ENCODE measurements at regions of chr21 and their contacts with region 1.

Region 1: DNA sequence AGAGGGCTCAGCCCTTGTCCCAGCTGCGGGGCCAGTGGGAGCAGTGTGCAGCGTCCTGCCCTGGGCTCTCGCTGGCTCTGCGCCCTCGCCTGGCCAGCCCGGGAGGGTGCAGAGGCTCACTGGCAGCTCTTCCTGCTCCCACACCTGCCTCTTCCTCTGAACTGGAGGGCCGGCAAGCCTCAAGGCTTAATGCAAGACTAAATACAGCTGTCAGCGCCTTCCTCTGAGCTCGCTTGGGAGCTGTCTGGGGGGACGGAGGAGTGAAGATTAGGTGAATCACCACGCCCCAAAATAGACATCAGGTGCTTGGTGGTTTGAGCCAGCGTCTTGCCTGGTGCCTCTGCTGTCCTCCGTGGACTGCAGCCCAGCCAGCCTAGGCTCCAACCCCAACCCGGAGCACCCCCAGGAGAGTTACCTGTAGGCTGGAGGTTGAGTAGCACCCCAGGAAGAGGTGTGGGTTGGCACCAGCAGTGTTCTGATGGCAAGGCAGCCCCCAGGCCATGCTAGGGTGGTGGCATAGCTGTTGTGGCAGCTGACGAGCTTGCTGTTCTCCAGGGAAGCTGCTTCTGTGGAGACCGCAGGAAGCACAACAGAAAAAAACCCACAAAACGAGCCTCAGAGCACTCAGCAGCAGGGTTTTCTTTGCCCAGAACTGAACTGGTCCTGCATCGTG is 36.9 kb downstream of the UMODL1 start:
- DNase-seq: peak; percentile 71 to 88 (median 80)
- ATAC-seq: peak; percentile 90
- H3K4me3 ChIP-seq: no peak overlapping the region
- H3K4me1 ChIP-seq: peaks cover 21% of the 10 kb centered on the region
- CTCF ChIP-seq: peak; percentile 89

Region 2: DNA sequence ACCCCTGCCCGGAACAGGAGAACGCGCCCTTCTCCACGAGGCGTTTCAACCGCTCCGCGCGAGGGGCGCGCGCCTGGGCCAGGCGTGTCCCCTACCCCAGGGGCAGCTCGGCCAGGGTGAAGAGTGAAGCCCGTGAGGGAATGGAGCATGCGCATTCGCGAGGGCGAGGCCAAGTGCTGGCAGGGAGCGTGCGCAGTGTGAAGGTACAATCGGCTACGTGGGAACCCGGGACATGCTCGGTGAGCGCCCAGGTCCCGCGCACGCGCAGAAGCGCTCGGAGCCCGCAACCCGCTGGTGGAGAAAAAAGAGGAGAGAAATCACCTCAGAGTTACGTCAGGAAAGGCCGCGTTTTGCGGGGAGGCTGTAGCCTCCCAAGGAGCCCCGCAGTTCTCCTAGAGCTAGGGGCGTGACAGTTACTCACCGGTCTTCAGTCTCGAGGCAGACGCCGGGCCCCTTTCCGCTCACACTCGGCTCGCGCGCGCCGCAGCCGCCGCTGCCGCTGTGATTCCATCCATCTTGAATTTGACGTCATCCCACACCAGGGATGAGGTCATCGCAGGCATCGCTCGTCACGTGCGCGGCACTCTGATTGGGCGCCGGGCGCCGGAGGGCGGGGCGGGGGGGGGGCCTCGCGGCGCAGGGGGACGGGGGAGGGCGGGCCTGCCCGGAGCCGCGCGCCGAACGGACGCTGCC is 98.0 kb before region 1 on chr21 and contains the start of gene ZBTB21:
- intact Hi-C with region 1: loop called in 1 of 2 experiments (anchors 10 kb)
- DNase-seq: peak; percentile 98 to 99 (median 99)
- ATAC-seq: peak; percentile 92
- H3K4me3 ChIP-seq: peak within 1 kb of the TSS; percentile 59
- H3K4me1 ChIP-seq: peaks cover 13% of the 10 kb centered on the region
- CTCF ChIP-seq: no peak
- total RNA-seq, gene ZBTB21: 11.8 to 18.9 (median 14.6) TPM

Measured in mucosa of descending colon (tissue), 3 donors.